ENCODE measurements at regions of chr16 and their contacts with region 1.

Region 1: GRCh38 chr16:48542020-48542473 is 67.9 kb downstream of the N4BP1 start:
- DNase-seq: no peak
- H3K4me3 ChIP-seq: no peak overlapping the region
- H3K27ac ChIP-seq: peak overlapping the region in 1 of 4 donors; percentile 16
- H3K4me1 ChIP-seq: peaks cover 19 to 34% (median 22%) of the 10 kb centered on the region in 4 donors
- H3K27me3 ChIP-seq: no peaks in the 10 kb centered on the region
- CTCF ChIP-seq: peak; percentile 27 to 52 (median 41)
- EP300 ChIP-seq: no peak
- POLR2A ChIP-seq: no peak

Region 2: GRCh38 chr16:48353565-48354163 is 188.4 kb before region 1 on chr16:
- intact Hi-C with region 1: loop called (anchors 5 kb)
- DNase-seq: no peak
- H3K4me3 ChIP-seq: no peak overlapping the region
- H3K27ac ChIP-seq: no peak overlapping the region
- H3K4me1 ChIP-seq: peaks cover 0 to 22% (median 6%) of the 10 kb centered on the region in 4 donors
- H3K27me3 ChIP-seq: no peaks in the 10 kb centered on the region
- CTCF ChIP-seq: peak; percentile 78 to 84 (median 79)
- EP300 ChIP-seq: no peak
- POLR2A ChIP-seq: no peak

Region 3: GRCh38 chr16:48609652-48610029 is 67.6 kb after region 1 on chr16:
- intact Hi-C with region 1: no loop called
- DNase-seq: no peak
- H3K4me3 ChIP-seq: peak overlapping the region; percentile 78 to 98 (median 90)
- H3K27ac ChIP-seq: peak overlapping the region; percentile 88 to 95 (median 94)
- H3K4me1 ChIP-seq: peaks cover 55 to 70% (median 59%) of the 10 kb centered on the region in 4 donors
- H3K27me3 ChIP-seq: no peaks in the 10 kb centered on the region
- CTCF ChIP-seq: no peak
- EP300 ChIP-seq: no peak
- POLR2A ChIP-seq: no peak

Measured in esophagus muscularis mucosa (tissue), 4 donors.